GM10248 (cell line): ENCODE measurements at regions of chr12 and their contacts with region 1.

Region 1: DNA sequence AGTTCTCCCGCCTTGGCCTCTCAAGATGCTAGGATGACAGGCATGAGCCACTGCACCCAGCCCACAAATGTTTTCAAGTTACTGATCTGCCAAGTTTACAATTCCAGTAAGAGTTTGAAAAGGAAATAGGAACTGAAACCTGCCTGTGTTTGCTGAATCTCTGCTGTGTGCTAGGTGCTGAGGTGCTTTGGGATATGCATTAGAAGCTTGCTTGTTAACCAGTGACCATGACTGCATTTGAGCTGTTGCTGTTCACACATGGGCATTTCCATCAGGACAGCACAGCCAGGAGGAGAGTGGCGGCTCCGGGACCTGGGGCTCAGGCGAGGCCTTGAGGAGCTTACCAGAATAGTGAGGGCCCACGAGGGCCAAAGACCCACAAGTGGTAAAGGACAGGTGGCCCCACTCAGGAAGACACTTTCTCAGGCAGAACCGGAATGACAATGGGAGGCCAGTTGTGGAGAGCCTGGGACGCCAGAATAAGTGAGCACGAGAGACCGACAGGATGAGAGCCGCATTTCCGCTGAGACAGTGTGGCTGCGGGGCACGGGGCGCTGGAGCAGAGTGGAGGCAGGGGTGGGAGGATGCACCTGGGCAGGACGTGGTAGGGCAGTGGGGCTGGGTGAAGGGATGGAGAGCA is 54.5 kb upstream of the MMP17 start:
- DNase-seq: peak; percentile 79
- CTCF ChIP-seq: no peak

Region 2: GRCh38 chr12:131735476-131736445 is 37.9 kb before region 1 on chr12:
- CTCF ChIA-PET with region 1: no interaction called
- POLR2A ChIA-PET with region 1: interaction called, 11 read pairs
- DNase-seq: no peak
- CTCF ChIP-seq: no peak

Region 3: GRCh38 chr12:131755305-131756113 is 18.2 kb before region 1 on chr12:
- CTCF ChIA-PET with region 1: interaction called, 12 read pairs
- POLR2A ChIA-PET with region 1: interaction called, 3 read pairs
- DNase-seq: peak; percentile 53
- CTCF ChIP-seq: peak; percentile 23